Adrenal gland (tissue), 19 donors: ENCODE measurements at regions of chr17 and their contacts with region 1.

Region 1: DNA sequence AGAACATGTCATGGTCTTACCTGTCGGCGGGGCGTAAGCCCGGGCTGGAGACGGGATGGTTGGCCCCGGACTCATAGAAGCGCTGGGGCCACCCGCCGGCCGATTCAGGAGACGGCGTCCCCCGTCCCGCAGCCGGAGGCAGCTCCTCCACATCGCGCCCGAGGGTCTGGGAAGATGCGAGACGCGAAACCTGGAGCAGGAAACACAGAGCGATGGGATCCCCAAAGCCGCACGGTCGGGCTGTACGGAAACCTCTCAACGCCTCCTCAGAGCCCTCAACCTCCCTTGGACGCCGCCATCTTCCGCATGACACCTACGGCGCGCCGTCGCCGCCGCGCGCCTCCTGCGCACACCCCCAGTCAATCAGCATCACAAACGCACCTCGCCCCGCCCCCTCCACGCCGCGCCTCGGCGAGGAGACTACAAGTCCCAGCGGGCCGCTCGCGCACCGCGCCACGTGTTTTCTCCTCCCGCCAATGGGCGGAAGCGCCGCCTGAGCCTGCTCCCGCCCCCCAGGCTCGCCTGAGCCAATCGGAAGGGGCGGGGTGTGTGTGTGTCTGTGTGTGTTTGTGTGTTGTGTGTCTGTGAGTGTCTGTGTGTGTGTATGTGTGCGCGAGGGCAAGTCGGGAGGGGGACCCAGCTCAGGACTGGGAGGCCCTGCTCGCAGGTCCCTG is at the starts of genes ATPAF2 and GID4:
- DNase-seq: peak; percentile 99 to 100 (median 100)
- H3K4me3 ChIP-seq: peak within 1 kb of the TSS; percentile 43 to 98 (median 56)
- H3K27ac ChIP-seq: peak within 1 kb of the TSS in 3 of 5 donors; percentile 55 to 82 (median 72)
- H3K4me1 ChIP-seq: peaks cover 27 to 52% of the 10 kb centered on the region in 2 donors
- H3K27me3 ChIP-seq: no peaks in the 10 kb centered on the region
- CTCF ChIP-seq: no peak
- POLR2A ChIP-seq: peak in 1 of 2 donors; percentile 61
- total RNA-seq, gene ATPAF2: 32.5 to 68.6 (median 39.5) TPM
- total RNA-seq, gene GID4: 6.3 to 16.7 (median 11.1) TPM

Region 2: GRCh38 chr17:17792551-17793377 is 246.2 kb before region 1 on chr17:
- intact Hi-C with region 1: loop called in 1 of 2 experiments (anchors 10 kb)
- DNase-seq: peak in 5 of 7 donors; percentile 42 to 82 (median 54)
- H3K4me3 ChIP-seq: no peak overlapping the region
- H3K27ac ChIP-seq: peak overlapping the region in 2 of 5 donors; percentile 44 to 64
- H3K4me1 ChIP-seq: peaks cover 6 to 12% of the 10 kb centered on the region in 2 donors
- H3K27me3 ChIP-seq: no peaks in the 10 kb centered on the region
- CTCF ChIP-seq: no peak
- POLR2A ChIP-seq: no peak

Region 3: DNA sequence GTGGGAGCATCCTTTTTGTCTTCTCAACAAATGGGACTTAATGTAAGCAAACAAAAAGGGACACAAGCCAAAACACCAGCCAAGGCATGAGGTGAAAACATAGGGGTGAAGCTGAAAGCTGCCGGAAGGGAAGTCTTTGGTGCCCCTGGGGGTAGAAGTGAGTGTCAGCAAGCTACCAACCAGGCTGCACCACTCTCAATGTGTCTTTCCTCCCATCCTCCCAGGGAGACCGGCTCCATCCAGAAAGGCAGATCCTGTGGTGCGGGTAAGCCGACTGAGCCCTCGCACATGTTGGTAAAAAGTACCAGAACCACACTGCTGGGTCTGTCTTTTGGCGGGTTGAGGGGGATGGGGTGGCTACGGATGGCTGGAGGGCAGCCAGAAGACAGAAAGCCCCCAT is 150.2 kb before region 1 on chr17:
- intact Hi-C with region 1: loop called in 1 of 2 experiments (anchors 5 kb)
- DNase-seq: no peak
- H3K4me3 ChIP-seq: no peak overlapping the region
- H3K27ac ChIP-seq: no peak overlapping the region
- H3K4me1 ChIP-seq: no peaks in the 10 kb centered on the region
- H3K27me3 ChIP-seq: no peaks in the 10 kb centered on the region
- CTCF ChIP-seq: no peak
- POLR2A ChIP-seq: no peak

Region 4: DNA sequence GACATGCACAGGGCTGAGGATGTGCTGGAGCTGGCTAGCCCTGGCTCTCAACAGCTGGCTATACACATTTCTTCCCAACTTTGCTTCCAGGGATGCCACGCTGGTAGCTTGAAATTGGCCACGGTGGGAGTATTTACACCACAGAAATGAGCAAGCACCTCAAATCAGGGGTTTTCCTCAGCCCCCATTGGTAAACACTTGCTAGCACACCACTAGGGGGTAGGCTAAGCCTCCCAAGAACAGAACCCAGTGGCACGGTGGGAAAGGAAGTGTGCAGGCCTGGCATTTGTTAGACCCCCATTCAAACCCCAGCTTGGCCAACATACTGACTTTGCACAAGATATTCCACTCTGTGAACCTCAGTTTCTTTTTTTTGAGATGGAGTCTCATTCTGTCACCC is 53.4 kb before region 1 on chr17:
- intact Hi-C with region 1: loop called in 1 of 2 experiments (anchors 10 kb)
- DNase-seq: no peak
- H3K4me3 ChIP-seq: no peak overlapping the region
- H3K27ac ChIP-seq: no peak overlapping the region
- H3K4me1 ChIP-seq: peaks cover 0 to 13% of the 10 kb centered on the region in 2 donors
- H3K27me3 ChIP-seq: no peaks in the 10 kb centered on the region
- CTCF ChIP-seq: peak in 2 of 6 experiments; percentile 7 to 26
- POLR2A ChIP-seq: no peak

Region 5: DNA sequence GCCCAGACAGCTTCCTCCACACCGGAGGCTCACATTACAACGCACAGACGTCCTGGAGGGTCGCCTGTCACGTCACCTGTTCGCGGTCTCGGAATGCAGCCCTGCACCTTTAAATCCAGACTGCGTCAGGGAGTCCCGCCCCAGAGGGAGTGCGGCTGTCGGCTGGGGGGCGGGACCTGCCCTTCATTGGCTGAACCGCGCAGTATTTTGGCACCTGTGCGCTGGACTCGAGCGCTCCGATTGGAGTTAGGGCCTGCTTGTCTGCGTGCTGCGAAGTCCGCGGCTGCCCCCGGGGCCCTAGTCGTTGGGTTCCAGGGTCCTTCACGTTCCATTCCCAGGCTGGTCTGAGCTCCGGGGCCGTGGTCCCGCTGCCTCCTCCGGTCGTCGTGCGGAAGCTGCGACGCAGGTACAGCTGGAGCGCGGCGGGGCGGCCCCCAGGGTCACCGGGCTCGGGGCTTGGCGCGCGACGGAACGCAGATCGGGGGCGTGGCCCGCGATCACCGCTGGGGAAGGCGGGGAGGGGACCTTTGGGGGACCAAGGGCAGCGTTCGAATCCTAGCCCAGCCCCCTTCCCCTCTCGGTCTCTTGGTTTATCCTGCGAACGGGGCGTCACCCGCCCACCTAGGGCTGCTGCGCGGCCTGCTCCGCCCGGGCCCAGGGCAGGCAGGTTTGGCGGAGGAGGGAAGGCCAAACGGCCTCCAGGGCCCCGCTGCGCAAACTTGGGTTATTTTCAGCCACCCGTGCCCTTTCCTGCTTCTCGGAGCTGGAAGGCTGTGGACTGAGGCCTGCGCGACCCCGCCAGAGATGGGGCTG is 221.5 kb after region 1 on chr17 and contains the start of gene MIEF2:
- intact Hi-C with region 1: no loop called
- DNase-seq: peak; percentile 94 to 98 (median 97)
- H3K4me3 ChIP-seq: peak within 1 kb of the TSS; percentile 43 to 94 (median 80)
- H3K27ac ChIP-seq: peak within 1 kb of the TSS; percentile 91 to 96 (median 93)
- H3K4me1 ChIP-seq: peaks cover 41 to 53% of the 10 kb centered on the region in 2 donors
- H3K27me3 ChIP-seq: no peaks in the 10 kb centered on the region
- CTCF ChIP-seq: no peak
- POLR2A ChIP-seq: peak; percentile 5 to 71
- total RNA-seq, gene MIEF2: 16.4 to 46.6 (median 27.9) TPM